ENCODE measurements at regions of chr5 and their contacts with region 1.

Region 1: GRCh38 chr5:146446853-146447733 is at the start of gene TCERG1:
- DNase-seq: peak; percentile 100
- ATAC-seq: peak; percentile 91
- H3K4me3 ChIP-seq: peak within 1 kb of the TSS; percentile 77
- H3K27ac ChIP-seq: peak within 1 kb of the TSS; percentile 77
- H3K4me1 ChIP-seq: peaks cover 33% of the 10 kb centered on the region
- H3K27me3 ChIP-seq: no peaks in the 10 kb centered on the region
- CTCF ChIP-seq: peak; percentile 93
- total RNA-seq, gene TCERG1: 86.0 and 96.9 TPM in 2 replicates

Region 2: DNA sequence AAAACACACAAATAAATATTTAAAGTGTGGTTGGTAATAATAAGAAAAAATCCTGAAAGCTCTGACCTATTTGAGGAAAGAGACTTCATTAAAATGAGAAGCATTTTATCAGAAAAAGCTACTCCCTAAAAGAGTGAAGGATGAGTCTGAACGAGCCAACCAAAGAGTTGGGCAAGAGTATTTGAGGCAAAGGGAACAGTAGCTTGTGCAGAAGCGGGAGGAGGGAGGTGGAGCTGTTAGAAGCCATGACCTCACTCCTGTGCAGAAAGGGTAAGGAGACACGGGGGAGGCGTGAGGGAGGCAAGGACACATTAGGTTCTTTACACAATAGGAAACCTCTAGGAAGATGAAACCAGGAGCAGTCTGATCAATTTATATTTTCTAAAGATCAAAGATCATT is 481.3 kb before region 1 on chr5:
- CTCF ChIA-PET with region 1: no interaction called
- POLR2A ChIA-PET with region 1: no interaction called
- intact Hi-C with region 1: loop called (anchors 10 kb)
- DNase-seq: no peak
- ATAC-seq: no peak
- H3K4me3 ChIP-seq: no peak overlapping the region
- H3K27ac ChIP-seq: no peak overlapping the region
- H3K4me1 ChIP-seq: no peaks in the 10 kb centered on the region
- H3K27me3 ChIP-seq: no peaks in the 10 kb centered on the region
- CTCF ChIP-seq: no peak

Region 3: GRCh38 chr5:146203011-146203871 is 243.9 kb before region 1 on chr5 and contains the start of gene RBM27:
- CTCF ChIA-PET with region 1: no interaction called
- POLR2A ChIA-PET with region 1: no interaction called
- intact Hi-C with region 1: loop called (anchors 5 kb)
- DNase-seq: peak; percentile 99
- ATAC-seq: peak; percentile 99
- H3K4me3 ChIP-seq: peak within 1 kb of the TSS; percentile 76
- H3K27ac ChIP-seq: peak within 1 kb of the TSS; percentile 83
- H3K4me1 ChIP-seq: peaks cover 15% of the 10 kb centered on the region
- H3K27me3 ChIP-seq: no peaks in the 10 kb centered on the region
- CTCF ChIP-seq: no peak
- total RNA-seq, gene RBM27: 18.8 and 21.4 TPM in 2 replicates

Region 4: GRCh38 chr5:146306838-146307237 is 140.3 kb before region 1 on chr5:
- CTCF ChIA-PET with region 1: no interaction called
- POLR2A ChIA-PET with region 1: no interaction called
- intact Hi-C with region 1: no loop called
- DNase-seq: peak; percentile 34
- ATAC-seq: no peak; the same call in 1 of the 2 replicates
- H3K4me3 ChIP-seq: no peak overlapping the region
- H3K27ac ChIP-seq: no peak overlapping the region
- H3K4me1 ChIP-seq: peaks cover 3% of the 10 kb centered on the region; the same call in 1 of the 2 replicates
- H3K27me3 ChIP-seq: no peaks in the 10 kb centered on the region
- CTCF ChIP-seq: no peak

Measured in PC-3 (cell line).